ENCODE measurements at regions of chr3 and their contacts with region 1.

Region 1: GRCh38 chr3:24494618-24495325 is at the start of gene THRB:
- DNase-seq: peak; percentile 77 to 79
- ATAC-seq: peak; percentile 71 to 87 (median 80)
- H3K4me3 ChIP-seq: peak within 1 kb of the TSS; percentile 46 to 85 (median 76)
- H3K27ac ChIP-seq: peak within 1 kb of the TSS; percentile 87 to 96 (median 94)
- H3K4me1 ChIP-seq: peaks cover 2 to 45% (median 20%) of the 10 kb centered on the region in 9 donors
- H3K27me3 ChIP-seq: peaks cover 0 to 55% (median 0%) of the 10 kb centered on the region in 7 donors
- CTCF ChIP-seq: peak in 8 of 9 donors; percentile 21 to 51 (median 36)
- total RNA-seq, gene THRB: 14.4 to 32.8 (median 26.4) TPM

Region 2: GRCh38 chr3:23999012-23999641 is 495.6 kb before region 1 on chr3:
- intact Hi-C with region 1: loop called in 2 of 10 experiments (anchors 10 kb)
- DNase-seq: peak; percentile 53 to 66
- ATAC-seq: peak in 1 of 8 donors; percentile 28
- H3K4me3 ChIP-seq: no peak overlapping the region
- H3K27ac ChIP-seq: no peak overlapping the region
- H3K4me1 ChIP-seq: peaks cover 0 to 18% (median 7%) of the 10 kb centered on the region in 9 donors
- H3K27me3 ChIP-seq: no peaks in the 10 kb centered on the region
- CTCF ChIP-seq: peak; percentile 74 to 95 (median 89)

Region 3: GRCh38 chr3:24351779-24352469 is 142.8 kb before region 1 on chr3:
- intact Hi-C with region 1: loop called in 2 of 10 experiments (anchors 5 kb)
- DNase-seq: peak in 1 of 2 donors; percentile 75
- ATAC-seq: peak; percentile 69 to 93 (median 84)
- H3K4me3 ChIP-seq: no peak overlapping the region
- H3K27ac ChIP-seq: peak overlapping the region in 2 of 10 donors; percentile 13 to 48
- H3K4me1 ChIP-seq: peaks cover 5 to 22% (median 12%) of the 10 kb centered on the region in 9 donors
- H3K27me3 ChIP-seq: no peaks in the 10 kb centered on the region
- CTCF ChIP-seq: no peak

Region 4: GRCh38 chr3:24365194-24365612 is 129.6 kb before region 1 on chr3:
- intact Hi-C with region 1: loop called in 6 of 10 experiments (anchors 2 to 10 kb)
- DNase-seq: peak in 1 of 2 donors; percentile 51
- ATAC-seq: peak; percentile 74 to 95 (median 88)
- H3K4me3 ChIP-seq: no peak overlapping the region
- H3K27ac ChIP-seq: peak overlapping the region in 5 of 10 donors; percentile 17 to 55 (median 46)
- H3K4me1 ChIP-seq: peaks cover 0 to 39% (median 19%) of the 10 kb centered on the region in 9 donors
- H3K27me3 ChIP-seq: no peaks in the 10 kb centered on the region
- CTCF ChIP-seq: peak in 7 of 9 donors; percentile 8 to 52 (median 22)

Region 5: GRCh38 chr3:24446032-24446431 is 48.7 kb before region 1 on chr3:
- intact Hi-C with region 1: loop called in 2 of 10 experiments (anchors 5 kb)
- DNase-seq: no peak
- ATAC-seq: peak in 6 of 8 donors; percentile 11 to 81 (median 75)
- H3K4me3 ChIP-seq: peak overlapping the region in 1 of 10 donors; percentile 6
- H3K27ac ChIP-seq: peak overlapping the region in 7 of 10 donors; percentile 1 to 63 (median 53)
- H3K4me1 ChIP-seq: peaks cover 0 to 32% (median 12%) of the 10 kb centered on the region in 9 donors
- H3K27me3 ChIP-seq: no peaks in the 10 kb centered on the region
- CTCF ChIP-seq: no peak

Region 6: DNA sequence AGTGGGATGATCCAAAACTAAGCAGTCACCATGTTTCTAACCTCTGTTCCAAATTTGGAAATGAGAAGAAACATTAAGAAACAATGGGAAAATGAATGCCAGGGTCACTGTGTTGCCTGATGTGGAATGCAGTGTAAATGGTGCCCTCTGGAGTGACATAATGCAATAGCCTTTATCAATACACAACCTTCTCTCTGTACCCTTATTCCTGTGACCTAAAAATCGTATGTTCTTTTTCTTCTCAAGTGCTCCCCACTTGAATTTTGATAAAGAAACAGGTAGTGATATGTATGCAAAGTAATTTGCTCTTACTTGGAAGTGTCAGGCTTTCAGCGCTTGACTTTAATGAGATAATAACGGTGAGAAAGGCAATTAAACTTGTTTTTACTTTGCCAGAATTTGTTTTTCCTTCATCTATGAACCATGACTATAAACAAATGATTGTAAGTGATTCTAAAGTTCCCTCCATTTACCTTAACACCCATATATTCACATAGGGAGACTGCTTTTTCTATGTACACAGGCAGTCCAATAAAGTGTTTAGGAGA is 145.6 kb after region 1 on chr3:
- intact Hi-C with region 1: no loop called
- DNase-seq: no peak
- ATAC-seq: peak in 3 of 8 donors; percentile 42 to 68 (median 49)
- H3K4me3 ChIP-seq: no peak overlapping the region
- H3K27ac ChIP-seq: no peak overlapping the region
- H3K4me1 ChIP-seq: peaks cover 0 to 13% (median 0%) of the 10 kb centered on the region in 9 donors
- H3K27me3 ChIP-seq: no peaks in the 10 kb centered on the region
- CTCF ChIP-seq: peak in 8 of 9 donors; percentile 12 to 63 (median 52)